Activated CD4-positive, alpha-beta T cell treated with anti-CD3 and anti-CD28 coated beads, Interleukin-2, amount 10 ng/mL, durations not matched to agents 24 days and 14 days (primary cell): ENCODE measurements at regions of chr1 and their contacts with region 1.

Region 1: DNA sequence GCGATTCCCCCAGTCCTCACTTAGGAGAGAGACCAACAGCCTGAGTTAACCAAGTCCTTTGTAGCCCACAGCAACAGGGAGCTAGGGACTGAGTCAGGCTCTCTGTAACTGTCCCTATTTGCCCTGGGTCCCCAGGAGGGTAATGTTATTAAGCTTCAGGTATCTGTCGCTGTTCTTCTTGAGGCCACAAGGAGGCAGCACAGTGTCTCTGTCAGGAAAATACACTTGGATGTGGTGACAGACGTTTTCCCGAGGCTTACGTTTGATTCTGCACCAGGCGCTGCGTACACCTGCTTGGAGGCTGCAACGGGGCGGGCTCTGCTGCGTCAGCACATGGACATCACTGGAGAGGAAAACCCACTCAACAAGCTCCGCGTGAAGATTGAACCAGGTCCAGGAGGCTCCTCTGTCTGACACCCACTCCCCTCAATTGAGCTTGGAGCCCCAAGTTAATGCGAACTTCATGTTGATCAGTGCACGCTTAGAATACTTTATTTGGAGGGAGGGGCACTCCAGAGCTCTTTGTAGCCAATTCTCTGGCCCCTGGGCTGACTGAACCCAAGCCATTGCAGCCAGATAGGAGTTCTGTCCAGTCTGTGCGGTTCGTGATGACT is 10.7 kb upstream of the ELF3 start:
- DNase-seq: peak; percentile 70
- H3K4me3 Mint-ChIP-seq: no peak overlapping the region
- H3K27ac Mint-ChIP-seq: no peak overlapping the region
- H3K4me1 Mint-ChIP-seq: no peaks in the 10 kb centered on the region
- H3K27me3 Mint-ChIP-seq: no peaks in the 10 kb centered on the region

Region 2: DNA sequence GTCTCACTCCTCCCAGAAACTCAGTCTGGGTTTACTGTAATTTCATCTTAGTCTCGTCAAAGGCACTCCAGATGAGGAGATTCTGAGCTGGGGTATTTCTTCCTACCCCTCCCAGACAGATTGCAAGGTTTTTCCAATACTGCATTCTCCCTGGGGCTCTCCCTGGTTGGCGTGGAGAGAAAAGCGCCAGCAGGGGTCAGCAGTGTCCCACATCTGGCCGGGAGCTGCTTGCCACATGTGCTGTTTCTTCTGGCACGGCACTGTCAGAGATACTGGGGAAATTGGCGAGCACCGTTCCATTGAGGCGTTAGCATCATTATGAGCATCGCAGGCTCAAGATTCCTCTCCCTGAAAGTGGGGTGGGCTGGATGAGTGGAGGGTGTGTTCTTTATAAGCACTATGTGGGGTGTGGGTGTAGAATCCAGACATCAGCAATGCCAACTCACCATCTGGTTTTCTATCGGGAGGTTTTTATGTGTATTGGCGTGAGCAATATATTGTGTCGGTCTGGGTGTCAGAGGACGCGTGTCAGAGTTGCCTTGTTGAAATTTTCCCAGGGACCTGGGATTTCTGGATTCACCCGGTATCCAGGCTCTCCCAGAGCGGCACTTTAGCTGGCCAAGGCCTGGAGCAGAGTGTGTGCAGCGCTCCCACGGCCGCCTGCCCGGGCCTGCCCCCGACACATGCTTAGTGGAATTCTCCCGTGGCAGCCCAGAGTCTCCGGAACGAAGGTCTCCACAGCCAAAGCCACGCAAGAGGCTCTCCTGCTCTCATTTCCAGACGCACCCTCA is 468.8 kb before region 1 on chr1:
- intact Hi-C with region 1: no loop called
- DNase-seq: peak; percentile 76
- H3K4me3 Mint-ChIP-seq: no peak overlapping the region
- H3K27ac Mint-ChIP-seq: no peak overlapping the region
- H3K4me1 Mint-ChIP-seq: peaks cover 11% of the 10 kb centered on the region
- H3K27me3 Mint-ChIP-seq: no peaks in the 10 kb centered on the region

Region 3: DNA sequence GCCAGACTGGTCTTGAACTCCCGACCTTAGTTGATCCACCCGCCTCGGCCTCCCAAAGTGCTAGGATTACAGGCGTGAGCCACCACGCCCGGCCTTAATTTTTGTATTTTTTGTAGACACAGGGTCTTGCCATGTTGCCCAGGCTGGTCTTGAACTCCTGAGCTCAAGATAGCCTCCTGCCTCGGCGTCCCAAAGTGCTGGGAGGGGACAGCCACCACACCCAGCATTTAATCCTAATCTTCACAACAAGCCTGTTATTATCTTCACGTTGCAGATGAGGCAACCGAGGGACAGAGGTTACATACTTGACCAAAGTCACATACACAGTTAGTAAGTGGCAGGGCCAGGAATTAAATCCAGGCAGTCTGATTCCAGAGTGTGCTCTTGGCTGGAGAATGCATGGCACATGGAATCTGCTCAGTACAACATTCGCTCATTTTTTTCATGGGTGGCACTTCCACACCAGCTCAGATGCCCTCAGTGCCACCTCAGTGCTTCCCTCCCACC is 118.2 kb after region 1 on chr1:
- intact Hi-C with region 1: loop called (anchors 2 kb)
- DNase-seq: no peak
- H3K4me3 Mint-ChIP-seq: no peak overlapping the region
- H3K27ac Mint-ChIP-seq: no peak overlapping the region
- H3K4me1 Mint-ChIP-seq: no peaks in the 10 kb centered on the region
- H3K27me3 Mint-ChIP-seq: peaks cover 7% of the 10 kb centered on the region